ENCODE measurements at regions of chr2 and their contacts with region 1.

Region 1: DNA sequence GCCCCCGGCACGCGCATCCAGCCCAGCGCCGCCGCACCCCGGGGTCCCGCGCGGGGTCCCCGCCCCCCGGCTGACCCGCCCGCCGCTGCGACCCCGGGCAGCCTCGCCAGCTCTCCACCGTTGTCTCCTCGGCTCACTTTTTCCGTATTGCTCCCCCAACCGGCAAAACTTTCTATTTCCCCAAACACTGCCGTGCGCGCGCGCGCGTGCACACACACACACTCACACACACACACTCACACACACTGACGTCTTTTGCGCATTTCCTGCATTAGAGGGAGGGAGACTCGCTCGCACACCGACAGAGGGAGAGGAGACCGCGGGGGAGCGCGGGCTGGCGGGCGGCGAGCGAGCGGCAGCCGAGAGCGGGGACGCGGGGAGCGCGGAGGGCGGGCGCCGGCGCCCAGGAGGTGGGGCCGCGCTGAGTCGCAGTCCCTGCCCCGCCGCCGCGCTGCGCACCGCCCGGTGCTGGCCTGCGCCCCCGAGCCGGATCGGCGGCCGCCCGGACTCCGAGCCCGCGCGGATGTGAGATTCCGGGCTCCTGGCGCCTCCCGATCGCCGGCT is 542 bp upstream of the PRKCE start:
- DNase-seq: peak; percentile 92
- H3K4me3 Mint-ChIP-seq: peak overlapping the region; percentile 94
- H3K27ac Mint-ChIP-seq: peak overlapping the region; percentile 94
- H3K4me1 Mint-ChIP-seq: peaks cover 25% of the 10 kb centered on the region
- H3K27me3 Mint-ChIP-seq: no peaks in the 10 kb centered on the region
- CTCF ChIP-seq: peak; percentile 48

Region 2: GRCh38 chr2:45469314-45470099 is 181.4 kb before region 1 on chr2:
- CTCF ChIA-PET with region 1: no interaction called
- intact Hi-C with region 1: no loop called
- DNase-seq: peak; percentile 38
- H3K4me3 Mint-ChIP-seq: no peak overlapping the region
- H3K27ac Mint-ChIP-seq: peak overlapping the region; percentile 63
- H3K4me1 Mint-ChIP-seq: no peaks in the 10 kb centered on the region
- H3K27me3 Mint-ChIP-seq: no peaks in the 10 kb centered on the region
- CTCF ChIP-seq: no peak

Region 3: GRCh38 chr2:45675263-45675812 is 24.4 kb after region 1 on chr2:
- CTCF ChIA-PET with region 1: interaction called, 6 read pairs
- intact Hi-C with region 1: loop called (anchors 2 kb)
- DNase-seq: peak; percentile 69
- H3K4me3 Mint-ChIP-seq: peak overlapping the region; percentile 49
- H3K27ac Mint-ChIP-seq: peak overlapping the region; percentile 97
- H3K4me1 Mint-ChIP-seq: peaks cover 63% of the 10 kb centered on the region
- H3K27me3 Mint-ChIP-seq: no peaks in the 10 kb centered on the region
- CTCF ChIP-seq: no peak

Region 4: DNA sequence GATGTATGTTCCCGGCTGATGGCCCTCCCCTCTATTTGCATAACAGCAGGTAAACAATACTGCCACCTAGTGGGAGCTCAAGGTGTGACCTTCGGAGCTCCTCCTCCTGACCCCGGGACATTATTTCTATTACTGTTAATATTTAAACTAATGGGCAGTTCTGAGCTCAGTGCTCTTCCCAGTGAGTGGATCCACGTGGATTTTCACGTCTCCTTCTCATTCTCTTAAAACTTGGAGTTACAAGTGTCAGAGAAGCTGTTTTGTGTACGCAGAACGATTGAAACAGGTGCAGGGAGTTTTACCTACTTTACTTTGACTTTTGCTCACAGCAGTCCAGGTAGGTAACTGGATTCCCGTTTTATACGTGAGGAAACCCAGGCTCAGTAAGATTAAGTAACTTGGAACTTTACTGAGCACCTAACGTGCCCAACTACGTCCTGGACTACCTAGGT is 127.8 kb after region 1 on chr2:
- CTCF ChIA-PET with region 1: interaction called, 14 read pairs
- intact Hi-C with region 1: loop called (anchors 1 kb)
- DNase-seq: peak; percentile 84
- H3K4me3 Mint-ChIP-seq: peak overlapping the region; percentile 41
- H3K27ac Mint-ChIP-seq: no peak overlapping the region
- H3K4me1 Mint-ChIP-seq: peaks cover 14% of the 10 kb centered on the region
- H3K27me3 Mint-ChIP-seq: no peaks in the 10 kb centered on the region
- CTCF ChIP-seq: peak; percentile 61

Region 5: DNA sequence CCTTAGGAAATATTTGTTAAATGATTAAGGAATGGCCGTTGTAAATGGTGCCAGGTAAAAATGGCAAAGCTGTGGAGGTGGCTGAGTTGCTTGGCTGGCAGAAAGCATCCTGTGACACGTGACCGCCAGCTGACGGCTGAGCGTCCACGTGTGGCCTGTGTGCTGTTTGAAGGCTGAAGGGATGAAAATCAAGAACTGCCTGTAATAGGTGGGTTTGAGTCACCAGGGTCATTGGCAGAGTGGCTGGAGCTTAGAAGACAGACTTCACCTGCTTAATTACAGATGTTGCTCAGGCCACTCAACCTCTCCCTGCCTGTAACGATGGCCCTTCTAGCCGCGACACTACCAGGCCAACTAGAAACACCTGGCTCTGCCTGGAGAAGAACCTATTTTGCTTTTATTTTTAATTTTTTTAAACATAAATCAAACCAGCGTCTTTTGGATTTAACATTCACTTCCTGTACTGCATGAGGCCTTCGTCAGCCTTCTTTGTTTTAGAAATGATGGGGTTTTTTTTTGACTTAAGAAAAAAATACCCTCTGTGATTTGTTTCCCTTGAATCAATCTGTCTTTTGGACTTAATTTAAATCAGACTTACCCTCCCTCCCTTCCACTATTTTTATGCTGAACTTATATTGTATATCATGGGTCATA is 207.1 kb after region 1 on chr2:
- CTCF ChIA-PET with region 1: interaction called, 14 read pairs
- intact Hi-C with region 1: no loop called
- DNase-seq: no peak
- H3K4me3 Mint-ChIP-seq: no peak overlapping the region
- H3K27ac Mint-ChIP-seq: no peak overlapping the region
- H3K4me1 Mint-ChIP-seq: peaks cover 18% of the 10 kb centered on the region
- H3K27me3 Mint-ChIP-seq: no peaks in the 10 kb centered on the region
- CTCF ChIP-seq: no peak

Measured in Calu3 (cell line).